Activated T-helper 2 cell treated with anti-CD3 and anti-CD28 coated beads, Interferon-gamma antibody, Interleukin-2, Interleukin-4, amounts not matched to agents 10 μg/mL and 5 μg/mL and 100 μg/mL, durations not matched to agents 14 hours and 24 hours and 36 hours (primary cell): ENCODE measurements at regions of chr6 and their contacts with region 1.

Region 1: DNA sequence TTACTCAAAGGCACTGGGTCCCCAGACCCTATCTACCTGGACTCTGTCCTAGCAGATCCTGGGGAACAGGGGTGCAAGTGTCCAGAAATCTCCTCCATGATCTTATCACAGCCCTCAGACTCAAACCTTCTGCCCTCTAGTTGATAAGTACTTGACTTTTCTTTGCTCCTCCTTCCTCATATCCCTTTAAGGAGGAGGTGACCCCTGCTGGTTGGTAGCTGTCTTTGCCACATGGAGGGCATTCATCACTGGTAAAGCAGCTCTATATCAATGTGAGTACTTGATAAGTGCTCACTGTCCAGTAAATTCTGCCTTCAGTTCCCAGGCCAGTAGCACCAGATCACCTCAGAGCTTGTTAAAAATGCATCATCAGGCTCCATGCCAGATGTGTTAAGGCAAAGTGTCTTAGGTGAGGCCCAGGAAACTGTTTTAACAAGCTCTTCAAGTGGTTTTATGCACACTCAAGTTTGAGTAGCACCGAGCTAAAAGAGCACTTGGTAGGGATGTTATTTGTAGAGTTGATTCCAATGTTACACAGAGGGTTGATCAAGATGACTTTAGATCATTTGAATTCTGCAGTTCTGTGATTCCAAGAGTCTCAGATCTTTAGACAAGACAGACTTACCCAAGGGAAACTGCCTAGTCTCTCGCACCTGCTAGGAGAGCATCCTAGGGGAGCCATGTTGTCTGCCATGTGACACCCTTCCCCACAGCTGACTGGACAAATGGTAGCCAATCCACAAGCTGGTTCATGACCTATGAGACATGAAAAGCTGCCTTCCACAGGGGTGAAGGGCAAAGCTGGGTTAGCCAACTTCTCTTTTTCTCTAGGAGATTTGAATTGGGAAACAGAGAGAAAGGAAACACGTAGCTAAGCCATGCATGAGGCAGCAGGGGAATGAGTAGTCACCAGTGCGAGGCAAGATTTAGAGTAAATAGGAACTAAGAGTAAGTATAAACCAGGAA is 18.6 kb downstream of the TREML2 start:
- DNase-seq: peak; percentile 47
- H3K4me3 Mint-ChIP-seq: no peak overlapping the region
- H3K27ac Mint-ChIP-seq: no peak overlapping the region
- H3K4me1 Mint-ChIP-seq: peaks cover 16% of the 10 kb centered on the region
- H3K27me3 Mint-ChIP-seq: peaks cover 9% of the 10 kb centered on the region

Region 2: GRCh38 chr6:41092421-41093140 is 89.8 kb before region 1 on chr6:
- intact Hi-C with region 1: loop called (anchors 1 kb)
- DNase-seq: no peak
- H3K4me3 Mint-ChIP-seq: no peak overlapping the region
- H3K27ac Mint-ChIP-seq: no peak overlapping the region
- H3K4me1 Mint-ChIP-seq: peaks cover 4% of the 10 kb centered on the region
- H3K27me3 Mint-ChIP-seq: no peaks in the 10 kb centered on the region